ENCODE measurements at regions of chr17 and their contacts with region 1.

Region 1: DNA sequence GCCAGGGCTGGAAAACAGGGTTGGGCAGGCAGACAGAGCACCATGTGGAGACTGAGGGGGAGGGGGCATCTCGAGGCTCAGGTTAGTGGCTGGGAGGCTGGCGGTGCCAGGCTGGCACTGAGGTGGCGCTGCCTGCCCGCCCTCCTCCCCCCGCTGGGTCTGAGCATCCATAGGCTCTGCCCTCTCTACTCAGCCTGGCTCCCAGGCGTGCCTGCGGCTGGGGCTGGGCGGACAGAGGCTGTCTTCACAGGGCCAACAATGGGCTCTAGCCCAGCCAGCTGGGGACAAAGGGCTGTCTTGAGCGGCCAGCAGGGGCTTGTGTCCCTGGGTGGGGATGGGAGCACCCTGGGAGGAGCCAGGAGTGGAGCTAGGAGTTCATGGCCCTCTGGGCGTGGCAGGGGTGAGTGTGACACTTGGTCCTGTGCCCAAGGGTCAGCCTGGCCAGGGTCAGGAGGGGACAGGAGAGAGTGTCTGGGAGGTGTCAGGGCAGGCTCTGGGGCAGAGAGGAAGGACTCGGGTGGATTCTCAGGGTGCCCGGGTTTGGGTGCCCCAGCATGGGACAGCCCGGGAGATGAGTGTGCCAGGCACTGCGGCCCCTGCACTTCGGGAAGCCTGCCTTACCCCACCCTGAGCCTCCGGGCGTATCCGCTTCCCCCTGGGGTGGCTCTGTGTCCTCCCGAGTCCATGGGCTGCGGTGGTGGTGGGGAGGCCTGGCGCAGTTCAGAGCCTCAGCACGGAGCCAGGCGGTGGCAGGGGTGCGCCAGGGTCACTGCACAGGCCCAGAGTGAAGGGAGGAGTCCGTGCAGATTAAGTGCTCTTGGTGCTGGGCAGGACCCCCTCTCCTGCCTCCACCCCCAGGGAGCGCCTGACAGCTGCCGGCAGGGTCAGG is 20.9 kb downstream of the MYBBP1A start:
- DNase-seq: peak; percentile 35 to 98 (median 94)
- H3K4me3 ChIP-seq: peak overlapping the region in 56 of 59 donors; percentile 4 to 62 (median 42)
- H3K27ac ChIP-seq: peak overlapping the region; percentile 85 to 100 (median 98)
- H3K27me3 ChIP-seq: no peaks in the 10 kb centered on the region
- CTCF ChIP-seq: peak in 30 of 56 donors; percentile 8 to 50 (median 32)

Region 2: DNA sequence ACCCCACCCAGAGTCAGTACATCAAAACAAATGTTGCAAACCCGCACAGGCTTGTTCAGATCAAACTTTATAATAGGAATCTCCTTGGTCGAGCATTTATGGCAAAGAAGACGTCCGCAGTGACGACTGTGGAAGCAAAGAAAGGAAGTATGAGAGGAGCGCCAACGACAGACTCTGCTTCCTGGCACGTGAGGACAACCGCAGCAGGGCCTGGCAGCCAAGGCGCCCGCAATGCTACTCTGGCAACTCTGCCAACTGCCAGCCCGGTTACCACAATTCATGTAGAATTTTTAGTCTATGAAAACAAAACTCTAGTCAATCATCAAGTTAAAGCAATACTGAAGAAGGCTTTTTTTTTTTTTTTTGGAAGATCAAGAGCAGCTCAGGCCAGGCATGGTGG is 366.5 kb before region 1 on chr17:
- intact Hi-C with region 1: no loop called
- DNase-seq: peak in 4 of 10 donors; percentile 28 to 75 (median 50)
- H3K4me3 ChIP-seq: no peak overlapping the region
- H3K27ac ChIP-seq: peak overlapping the region in 23 of 59 donors; percentile 6 to 61 (median 35)
- H3K27me3 ChIP-seq: no peaks in the 10 kb centered on the region
- CTCF ChIP-seq: no peak

Region 3: DNA sequence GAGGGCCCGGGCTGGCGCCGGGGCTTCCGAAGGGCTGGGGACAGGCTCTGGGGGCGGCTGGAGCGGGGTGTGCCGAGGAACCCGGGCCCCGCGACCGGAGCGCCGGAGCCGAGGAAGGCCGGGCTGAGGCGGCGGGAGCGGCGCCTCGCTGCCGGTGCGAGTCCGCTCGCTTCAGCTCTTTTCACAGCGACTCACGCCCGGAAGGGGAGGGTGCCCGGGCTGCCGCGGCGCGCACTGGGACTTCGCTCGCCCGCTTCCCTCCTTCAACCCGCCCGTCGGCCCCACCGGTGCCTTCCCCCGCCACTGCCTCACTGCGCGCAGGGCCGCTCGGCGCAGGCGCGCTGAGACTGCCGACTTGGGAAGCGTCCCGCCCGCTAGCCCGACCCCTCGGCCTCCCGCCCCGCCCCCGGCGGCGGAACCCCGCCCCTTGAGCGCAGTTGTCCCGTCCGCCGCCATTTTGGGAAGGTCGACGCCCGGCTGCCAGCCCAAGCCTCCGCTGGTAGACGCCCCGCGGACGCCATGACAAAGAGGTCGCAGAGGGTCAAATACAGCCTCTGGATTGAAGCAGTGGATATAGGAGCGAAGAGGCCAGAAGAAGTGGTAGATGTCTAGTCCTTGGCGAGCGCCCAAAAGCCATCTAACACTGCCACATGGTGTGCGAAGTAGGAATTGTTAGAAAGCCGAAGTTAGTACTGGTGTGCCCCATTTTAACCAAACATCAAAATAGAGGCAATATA is 167.8 kb before region 1 on chr17 and contains the start of gene UBE2G1:
- intact Hi-C with region 1: no loop called
- DNase-seq: peak; percentile 94 to 99 (median 97)
- H3K4me3 ChIP-seq: peak within 1 kb of the TSS; percentile 67 to 100 (median 94)
- H3K27ac ChIP-seq: peak within 1 kb of the TSS; percentile 86 to 99 (median 96)
- H3K27me3 ChIP-seq: no peaks in the 10 kb centered on the region
- CTCF ChIP-seq: peak in 45 of 56 donors; percentile 13 to 63 (median 38)
- total RNA-seq, gene UBE2G1: 43.4 to 73.4 (median 57.3) TPM

Region 4: DNA sequence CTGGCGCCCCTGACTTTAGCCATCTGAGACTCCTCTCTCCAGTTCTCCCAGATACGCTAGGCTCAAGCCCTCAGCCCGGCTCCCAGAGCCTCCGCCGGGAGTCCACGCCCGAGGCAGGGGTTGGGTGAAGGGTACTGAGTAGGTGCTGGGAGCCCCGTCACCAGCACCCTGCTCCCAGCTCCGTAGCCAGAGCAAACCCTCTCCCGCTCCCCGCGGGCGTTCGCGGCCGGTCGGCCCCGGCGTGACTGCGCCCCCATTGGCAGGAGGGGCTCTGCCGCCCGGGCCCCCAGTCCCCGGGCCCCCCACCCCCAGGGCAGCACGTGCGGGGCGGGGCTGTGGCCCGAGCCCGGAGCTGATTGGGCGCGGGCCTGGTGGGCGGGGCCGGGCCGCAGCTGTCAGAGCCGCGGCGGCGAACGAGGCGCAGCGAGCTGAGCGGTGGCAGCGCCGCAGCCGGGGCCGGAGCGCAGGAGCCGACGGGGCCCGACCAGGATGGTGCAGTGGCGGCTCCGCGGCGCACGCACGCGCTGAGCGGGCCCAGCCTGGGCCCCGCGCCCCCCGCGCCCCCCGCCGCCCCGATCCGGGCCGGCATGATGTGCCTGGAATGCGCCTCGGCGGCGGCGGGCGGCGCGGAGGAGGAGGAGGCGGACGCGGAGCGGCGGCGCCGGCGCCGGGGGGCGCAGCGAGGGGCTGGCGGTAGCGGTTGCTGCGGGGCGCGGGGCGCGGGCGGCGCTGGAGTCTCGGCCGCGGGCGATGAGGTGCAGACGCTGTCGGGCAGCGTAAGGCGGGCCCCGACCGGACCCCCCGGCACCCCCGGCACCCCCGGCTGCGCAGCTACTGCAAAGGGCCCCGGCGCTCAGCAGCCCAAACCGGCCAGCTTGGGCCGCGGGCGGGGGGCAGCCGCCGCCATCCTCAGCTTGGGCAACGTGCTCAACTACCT is 35.5 kb before region 1 on chr17 and contains the start of gene SPNS2:
- intact Hi-C with region 1: loop called (anchors 2 kb)
- DNase-seq: peak; percentile 44 to 94 (median 82)
- H3K4me3 ChIP-seq: peak within 1 kb of the TSS; percentile 55 to 89 (median 71)
- H3K27ac ChIP-seq: peak within 1 kb of the TSS in 57 of 59 donors; percentile 18 to 89 (median 79)
- H3K27me3 ChIP-seq: peaks cover 0 to 4% (median 0%) of the 10 kb centered on the region in 45 donors
- CTCF ChIP-seq: peak in 30 of 56 donors; percentile 11 to 56 (median 32)
- total RNA-seq, gene SPNS2: 41.1 to 115 (median 69.7) TPM